Breast epithelium (tissue), 4 donors: ENCODE measurements at regions of chr13 and their contacts with region 1.

Region 1: DNA sequence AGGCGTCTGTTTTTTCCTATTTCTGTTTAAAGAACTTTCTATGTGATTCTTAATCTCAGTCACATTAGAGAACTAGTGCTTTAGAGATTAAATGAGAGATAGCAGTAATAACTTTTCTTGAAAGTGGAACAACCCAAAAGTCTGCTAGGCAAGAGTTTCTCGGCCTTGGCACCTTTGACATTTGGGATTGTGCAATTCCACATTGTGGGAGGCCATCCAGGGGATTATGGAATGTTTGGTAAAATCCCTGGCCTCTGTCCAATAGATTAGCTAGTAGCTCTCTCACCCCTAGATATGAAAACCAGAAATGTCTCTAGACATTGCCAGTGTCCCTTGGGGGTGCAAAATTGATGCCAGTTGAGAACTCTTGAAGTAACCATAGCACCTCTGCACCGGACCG is 45.0 kb upstream of the IL17D start:
- DNase-seq: no peak
- H3K4me3 ChIP-seq: no peak overlapping the region
- H3K27ac ChIP-seq: no peak overlapping the region
- H3K4me1 ChIP-seq: no peaks in the 10 kb centered on the region
- H3K27me3 ChIP-seq: no peaks in the 10 kb centered on the region
- CTCF ChIP-seq: no peak
- POLR2A ChIP-seq: no peak

Region 2: DNA sequence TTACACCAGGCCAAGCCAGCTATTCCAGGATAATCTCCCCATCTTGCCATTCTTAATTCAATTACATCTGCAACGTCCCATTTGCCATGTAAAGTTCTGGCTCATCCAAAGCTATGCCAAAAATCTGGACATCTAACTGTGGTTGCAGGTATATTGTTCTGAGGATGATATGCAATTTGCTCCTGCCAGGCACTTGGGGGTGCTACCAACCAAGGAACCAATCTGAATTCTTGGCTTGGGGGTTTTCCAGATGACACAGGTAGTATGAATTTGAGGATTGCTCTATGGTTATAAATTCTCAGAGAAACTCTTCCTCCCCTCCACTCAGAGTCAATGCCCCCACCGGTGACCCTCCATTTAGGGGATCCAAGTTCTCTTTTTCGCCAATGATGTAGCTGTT is 165.8 kb before region 1 on chr13:
- intact Hi-C with region 1: no loop called
- DNase-seq: no peak
- H3K4me3 ChIP-seq: no peak overlapping the region
- H3K27ac ChIP-seq: no peak overlapping the region
- H3K4me1 ChIP-seq: no peaks in the 10 kb centered on the region
- H3K27me3 ChIP-seq: no peaks in the 10 kb centered on the region
- CTCF ChIP-seq: peak in 1 of 3 donors; percentile 18
- POLR2A ChIP-seq: no peak

Region 3: DNA sequence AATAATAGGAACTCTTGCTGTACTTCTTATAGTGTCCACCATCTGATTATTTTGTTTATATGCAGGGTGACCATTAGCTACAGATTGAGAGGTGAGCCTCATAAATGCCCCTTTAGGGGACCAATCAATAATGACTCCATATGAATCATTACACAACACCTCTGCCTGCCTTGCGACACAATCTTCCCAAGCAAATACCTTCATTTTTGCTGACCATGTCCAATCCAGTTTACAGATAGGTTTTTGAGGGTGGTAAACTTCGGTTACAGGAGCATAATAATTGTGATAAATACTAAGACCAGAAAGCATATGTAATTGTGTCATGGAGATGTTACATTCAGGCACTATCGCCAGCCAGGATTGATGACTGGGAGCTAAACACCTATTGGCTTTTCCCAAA is 21.4 kb after region 1 on chr13:
- intact Hi-C with region 1: loop called (anchors 1 kb)
- DNase-seq: no peak
- H3K4me3 ChIP-seq: no peak overlapping the region
- H3K27ac ChIP-seq: no peak overlapping the region
- H3K4me1 ChIP-seq: no peaks in the 10 kb centered on the region
- H3K27me3 ChIP-seq: no peaks in the 10 kb centered on the region
- CTCF ChIP-seq: no peak
- POLR2A ChIP-seq: no peak